SK-N-SH (cell line): ENCODE measurements at regions of chr17 and their contacts with region 1.

Region 1: DNA sequence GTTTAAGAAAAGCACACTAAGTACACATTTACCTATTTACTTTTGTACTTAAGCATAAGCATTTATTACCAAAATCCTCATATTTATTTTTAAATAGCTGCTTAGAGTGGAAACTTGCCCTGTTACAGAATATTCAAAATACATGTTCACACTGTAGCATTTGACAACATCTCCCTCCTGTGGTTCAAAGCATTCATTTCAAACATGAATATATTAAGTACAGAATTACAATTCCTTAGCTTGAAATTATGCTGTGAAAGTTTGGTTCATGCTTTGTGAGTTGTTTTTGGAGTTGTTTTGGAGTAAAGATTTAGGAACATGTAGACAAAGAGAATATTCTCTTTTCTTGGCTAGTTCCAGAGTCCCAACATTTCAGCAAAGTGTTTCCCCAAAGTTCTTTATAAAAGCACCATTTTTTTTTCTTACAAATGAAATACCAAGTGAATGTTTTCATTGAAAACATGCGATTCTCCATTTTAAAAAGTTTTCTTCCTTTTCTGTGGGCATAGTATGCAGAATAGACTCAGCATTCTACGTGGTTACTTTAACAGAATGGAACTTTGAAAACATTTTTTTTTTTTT is 33.2 kb downstream of the TUBD1 start:
- DNase-seq: no peak
- H3K4me3 ChIP-seq: no peak overlapping the region
- H3K27ac ChIP-seq: peak overlapping the region; percentile 3 to 70; a peak in 2 of 4 replicates
- H3K4me1 ChIP-seq: peaks cover 0 to 12% of the 10 kb centered on the region in 2 experiments; a peak in 2 of 4 replicates
- H3K27me3 ChIP-seq: no peaks in the 10 kb centered on the region
- CTCF ChIP-seq: peak; percentile 92
- EP300 ChIP-seq: no peak
- RAD21 ChIP-seq: peak; percentile 92

Region 2: GRCh38 chr17:59676716-59677115 is 182.8 kb before region 1 on chr17:
- CTCF ChIA-PET with region 1: no interaction called
- POLR2A ChIA-PET with region 1: no interaction called
- DNase-seq: no peak
- H3K4me3 ChIP-seq: no peak overlapping the region
- H3K27ac ChIP-seq: peak overlapping the region in 1 of 2 experiments; percentile 31; a peak in 2 of 4 replicates
- H3K4me1 ChIP-seq: peaks cover 3 to 9% of the 10 kb centered on the region in 2 experiments
- H3K27me3 ChIP-seq: no peaks in the 10 kb centered on the region
- CTCF ChIP-seq: no peak
- EP300 ChIP-seq: no peak
- RAD21 ChIP-seq: no peak

Region 3: DNA sequence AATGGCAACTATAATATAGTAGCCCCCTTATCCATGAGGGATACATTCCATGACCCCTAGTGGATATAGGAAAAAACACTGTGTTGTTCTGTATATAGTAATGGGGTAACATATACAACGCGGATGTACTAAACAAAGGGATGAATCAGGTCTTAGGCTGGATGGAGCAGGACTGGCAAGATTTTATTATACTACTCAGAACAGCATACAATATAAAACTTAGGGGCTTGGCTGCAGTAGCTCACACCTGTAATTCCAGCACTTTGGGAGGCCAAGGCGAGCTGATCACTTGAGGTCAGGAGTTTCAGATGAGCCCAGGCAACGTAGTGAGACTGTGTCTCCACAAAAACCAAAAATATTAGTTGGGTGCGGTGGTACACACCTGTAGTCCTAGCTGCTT is 125.3 kb before region 1 on chr17:
- CTCF ChIA-PET with region 1: interaction called, 10 read pairs
- POLR2A ChIA-PET with region 1: no interaction called
- DNase-seq: no peak
- H3K4me3 ChIP-seq: no peak overlapping the region
- H3K27ac ChIP-seq: no peak overlapping the region
- H3K4me1 ChIP-seq: no peaks in the 10 kb centered on the region
- H3K27me3 ChIP-seq: no peaks in the 10 kb centered on the region
- CTCF ChIP-seq: no peak
- EP300 ChIP-seq: no peak
- RAD21 ChIP-seq: no peak

Region 4: DNA sequence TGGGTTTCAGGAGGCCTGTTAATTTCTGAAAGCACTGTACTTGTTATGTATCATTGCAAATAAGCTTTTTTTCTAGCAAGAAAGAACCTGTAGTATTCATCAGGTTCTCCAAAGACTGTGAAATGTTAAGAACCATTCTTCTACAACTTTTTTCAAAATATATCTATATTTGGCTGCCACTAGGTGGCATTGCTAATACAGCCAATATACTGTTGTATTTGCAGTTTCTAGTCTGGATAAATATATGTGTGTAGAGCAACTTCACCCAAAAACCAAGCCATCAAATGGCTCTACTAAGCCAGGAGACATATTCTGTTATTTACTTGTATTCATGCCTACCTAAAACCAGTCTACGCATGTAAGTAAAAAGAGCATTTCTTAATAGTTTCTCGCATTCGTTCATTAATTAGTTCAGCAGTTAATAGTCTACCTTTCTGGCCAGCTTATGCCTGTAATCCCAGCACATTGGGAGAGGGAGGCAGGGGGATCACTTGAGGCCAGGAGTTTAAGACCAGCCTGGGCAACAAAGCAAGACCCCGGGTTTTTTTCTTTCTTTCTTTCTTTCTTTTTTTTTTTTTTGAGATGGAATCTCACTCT is 112.6 kb before region 1 on chr17:
- CTCF ChIA-PET with region 1: interaction called, 16 read pairs
- POLR2A ChIA-PET with region 1: interaction called, 3 read pairs
- DNase-seq: peak; percentile 44
- H3K4me3 ChIP-seq: no peak overlapping the region; a peak in 1 of 4 replicates
- H3K27ac ChIP-seq: peak overlapping the region; percentile 4 to 54; a peak in 3 of 4 replicates
- H3K4me1 ChIP-seq: peaks cover 0 to 3% of the 10 kb centered on the region in 2 experiments; a peak in 1 of 4 replicates
- H3K27me3 ChIP-seq: no peaks in the 10 kb centered on the region
- CTCF ChIP-seq: peak; percentile 95
- EP300 ChIP-seq: no peak
- RAD21 ChIP-seq: peak; percentile 76

Region 5: DNA sequence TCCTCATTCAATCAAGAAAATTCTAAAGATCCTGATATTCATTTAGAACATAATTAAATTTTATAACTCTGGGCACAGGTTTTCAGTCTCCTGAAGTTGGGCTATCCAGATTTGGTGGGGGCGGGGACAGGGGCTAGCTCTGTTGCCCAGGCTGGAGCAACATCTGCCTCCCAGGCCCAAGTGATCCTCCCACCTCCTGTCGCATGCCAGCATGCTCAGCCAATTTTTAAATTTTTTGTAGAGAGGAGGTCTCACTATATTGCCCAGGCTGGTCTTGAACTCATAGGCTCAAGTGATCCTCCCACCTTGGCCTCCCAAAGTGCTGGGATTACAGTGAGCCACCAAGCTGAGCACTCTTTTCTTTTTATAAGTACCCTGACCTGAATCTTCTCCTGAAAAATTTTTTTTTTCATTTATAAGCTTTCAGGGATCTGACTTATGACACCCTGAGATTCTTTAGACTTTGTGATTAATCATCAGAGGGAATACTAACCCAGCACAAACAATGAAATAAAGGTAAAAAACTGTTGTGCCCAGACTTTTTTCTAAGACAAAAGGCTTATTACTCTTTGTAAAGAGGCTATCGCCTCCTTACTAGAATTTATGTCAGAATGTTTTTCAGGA is 29.4 kb before region 1 on chr17:
- CTCF ChIA-PET with region 1: interaction called, 14 read pairs
- POLR2A ChIA-PET with region 1: no interaction called
- DNase-seq: no peak
- H3K4me3 ChIP-seq: peak overlapping the region in 1 of 2 experiments; percentile 48; a peak in 3 of 4 replicates
- H3K27ac ChIP-seq: peak overlapping the region; percentile 87 to 100
- H3K4me1 ChIP-seq: peaks cover 14 to 64% of the 10 kb centered on the region in 2 experiments
- H3K27me3 ChIP-seq: no peaks in the 10 kb centered on the region
- CTCF ChIP-seq: no peak
- EP300 ChIP-seq: peak in 1 of 2 experiments; percentile 59; a peak in 1 of 4 replicates
- RAD21 ChIP-seq: no peak

Region 6: DNA sequence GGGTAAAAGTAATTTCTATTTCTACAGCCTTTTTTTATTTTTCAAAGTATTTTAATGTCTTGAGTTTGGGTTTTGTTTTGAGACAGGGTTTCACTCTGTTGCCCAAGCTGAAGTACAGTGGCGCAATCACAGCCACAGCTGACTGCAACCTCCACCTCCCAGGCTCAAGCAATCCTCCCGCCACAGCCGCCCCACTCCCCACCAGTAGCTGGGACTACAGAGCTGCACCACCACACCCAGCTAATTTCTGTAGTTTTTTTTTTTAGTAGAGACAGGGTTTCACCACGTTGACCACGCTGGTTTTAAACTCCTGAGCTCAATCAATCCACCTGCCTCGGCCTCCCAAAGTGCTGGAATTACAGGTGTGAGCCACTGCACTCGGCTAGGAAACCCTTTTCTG is 10.8 kb before region 1 on chr17:
- CTCF ChIA-PET with region 1: interaction called, 16 read pairs
- POLR2A ChIA-PET with region 1: no interaction called
- DNase-seq: no peak
- H3K4me3 ChIP-seq: no peak overlapping the region
- H3K27ac ChIP-seq: no peak overlapping the region
- H3K4me1 ChIP-seq: peaks cover 4 to 36% of the 10 kb centered on the region in 2 experiments; a peak in 3 of 4 replicates
- H3K27me3 ChIP-seq: no peaks in the 10 kb centered on the region
- CTCF ChIP-seq: no peak
- EP300 ChIP-seq: no peak
- RAD21 ChIP-seq: no peak

Region 7: DNA sequence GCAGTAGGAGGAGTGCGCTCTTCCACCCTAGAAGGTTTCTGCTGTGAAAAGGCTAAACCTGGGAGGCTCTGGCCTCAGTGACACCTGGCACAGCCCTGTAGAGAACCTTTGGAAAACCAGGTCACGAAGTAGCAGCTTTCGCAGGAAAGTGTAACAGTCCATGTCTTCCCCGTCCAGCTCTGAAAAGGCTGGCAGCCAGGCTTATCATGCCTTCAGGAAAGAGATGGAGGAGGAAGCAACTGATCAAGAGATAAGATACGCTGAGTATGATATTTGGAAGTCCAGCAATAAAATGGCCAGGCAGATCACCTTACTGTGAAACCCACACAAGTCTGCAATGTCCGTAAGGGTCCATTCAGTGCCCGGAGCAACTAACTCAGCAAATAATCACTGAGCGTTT is 10.9 kb after region 1 on chr17:
- CTCF ChIA-PET with region 1: interaction called, 11 read pairs
- POLR2A ChIA-PET with region 1: no interaction called
- DNase-seq: no peak
- H3K4me3 ChIP-seq: no peak overlapping the region
- H3K27ac ChIP-seq: no peak overlapping the region
- H3K4me1 ChIP-seq: no peaks in the 10 kb centered on the region; a peak in 1 of 4 replicates
- H3K27me3 ChIP-seq: no peaks in the 10 kb centered on the region
- CTCF ChIP-seq: no peak
- EP300 ChIP-seq: no peak
- RAD21 ChIP-seq: no peak

Region 8: DNA sequence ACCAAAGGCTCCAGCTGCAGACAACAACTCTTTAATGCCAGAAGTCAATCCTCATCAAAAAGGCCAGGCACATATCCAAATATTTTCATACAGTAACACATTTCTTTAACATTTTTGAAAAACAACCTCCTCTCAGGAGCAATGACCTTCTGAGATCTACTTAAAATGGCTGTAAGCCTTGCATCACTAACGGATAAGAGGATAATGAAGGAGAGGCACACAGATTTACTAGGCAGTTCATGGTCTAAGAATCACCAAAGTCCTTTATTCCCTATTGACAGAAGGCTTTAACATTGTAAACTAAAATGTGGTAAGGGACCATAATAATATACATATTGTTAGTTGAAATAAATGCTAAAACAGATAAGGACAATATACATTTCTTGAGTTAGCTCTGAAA is 417.7 kb after region 1 on chr17:
- CTCF ChIA-PET with region 1: no interaction called
- POLR2A ChIA-PET with region 1: no interaction called
- DNase-seq: no peak
- H3K4me3 ChIP-seq: no peak overlapping the region
- H3K27ac ChIP-seq: no peak overlapping the region
- H3K4me1 ChIP-seq: peaks cover 0 to 3% of the 10 kb centered on the region in 2 experiments; a peak in 1 of 4 replicates
- H3K27me3 ChIP-seq: no peaks in the 10 kb centered on the region
- CTCF ChIP-seq: no peak
- EP300 ChIP-seq: no peak
- RAD21 ChIP-seq: no peak